ENCODE measurements at regions of chr19 and their contacts with region 1.

Region 1: DNA sequence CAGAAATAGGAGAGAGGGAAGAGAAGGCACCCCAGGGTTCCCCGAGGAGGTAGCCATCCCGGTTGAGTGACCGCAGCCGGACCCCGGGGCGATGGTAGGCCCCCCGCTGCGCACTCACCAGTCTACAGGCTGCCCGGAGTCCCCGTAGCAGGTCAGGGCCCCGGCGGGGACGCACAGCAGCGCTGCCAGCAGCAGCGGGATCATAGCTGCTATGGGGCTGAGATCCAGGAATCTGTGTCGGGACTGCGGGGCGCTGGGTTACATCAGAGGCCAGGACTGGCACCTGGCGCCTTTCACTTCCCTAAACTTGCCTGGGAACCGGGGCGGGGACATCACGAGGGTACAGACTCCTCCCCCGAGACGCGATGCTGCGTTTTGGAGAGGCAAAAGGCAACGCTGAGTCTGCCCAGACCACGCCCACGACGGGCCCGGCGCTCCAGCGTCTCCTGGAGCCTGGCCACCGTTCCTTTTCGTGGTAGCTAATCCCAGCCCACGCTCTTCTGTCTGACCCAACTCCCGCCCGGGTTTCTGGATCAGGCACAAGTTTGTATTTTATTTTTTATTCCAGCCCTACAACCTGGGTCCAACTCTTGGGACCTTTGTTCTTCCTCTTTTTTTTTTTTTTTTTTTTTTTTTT is at the start of gene DNASE2:
- DNase-seq: peak; percentile 97 to 99
- H3K4me3 ChIP-seq: peak within 1 kb of the TSS; percentile 72
- CTCF ChIP-seq: no peak
- POLR2A ChIP-seq: no peak
- total RNA-seq, gene DNASE2: 31.8 to 50.6 (median 36.6) TPM

Region 2: GRCh38 chr19:12833738-12834565 is 47.3 kb before region 1 on chr19:
- intact Hi-C with region 1: no loop called
- DNase-seq: no peak
- H3K4me3 ChIP-seq: no peak overlapping the region
- CTCF ChIP-seq: no peak
- POLR2A ChIP-seq: no peak

Region 3: DNA sequence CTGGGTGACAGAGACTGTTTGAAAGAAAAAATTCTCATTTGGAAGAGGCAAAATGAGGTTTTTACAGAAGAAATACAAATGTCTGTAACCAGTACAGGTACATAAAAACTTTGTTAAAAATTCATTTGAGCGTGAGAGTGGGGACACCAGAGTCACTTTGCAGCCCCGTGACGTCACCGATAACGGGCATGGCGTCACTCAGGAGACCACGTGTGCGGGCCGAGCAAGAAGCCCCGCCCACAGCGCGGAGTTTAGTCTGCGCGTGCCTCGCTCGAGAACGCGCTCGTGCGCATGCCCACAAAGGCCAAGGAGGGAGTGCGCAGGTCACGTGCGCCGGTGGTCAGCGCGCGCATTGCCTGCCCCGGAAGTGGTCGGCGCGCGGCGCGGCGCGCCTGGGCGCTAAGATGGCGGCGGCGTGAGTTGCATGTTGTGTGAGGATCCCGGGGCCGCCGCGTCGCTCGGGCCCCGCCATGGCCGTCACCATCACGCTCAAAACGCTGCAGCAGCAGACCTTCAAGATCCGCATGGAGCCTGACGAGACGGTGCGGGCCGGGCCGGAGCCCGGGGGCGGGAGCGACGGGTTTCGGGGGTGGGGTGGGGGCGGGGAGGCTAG is 64.3 kb after region 1 on chr19 and contains the start of gene RAD23A:
- intact Hi-C with region 1: loop called (anchors 10 kb)
- DNase-seq: peak; percentile 95 to 99
- H3K4me3 ChIP-seq: peak within 1 kb of the TSS; percentile 44
- CTCF ChIP-seq: no peak
- POLR2A ChIP-seq: peak in 1 of 2 donors; percentile 91
- total RNA-seq, gene RAD23A: 101 to 128 (median 105) TPM

Region 4: GRCh38 chr19:12965017-12965811 is 83.9 kb after region 1 on chr19:
- intact Hi-C with region 1: no loop called
- DNase-seq: peak; percentile 62 to 96
- H3K4me3 ChIP-seq: peak overlapping the region; percentile 6
- CTCF ChIP-seq: peak in 1 of 3 donors; percentile 74
- POLR2A ChIP-seq: no peak

Measured in lower leg skin (tissue), 4 donors.